Sigmoid colon (tissue), 7 donors: ENCODE measurements at regions of chr2 and their contacts with region 1.

Region 1: DNA sequence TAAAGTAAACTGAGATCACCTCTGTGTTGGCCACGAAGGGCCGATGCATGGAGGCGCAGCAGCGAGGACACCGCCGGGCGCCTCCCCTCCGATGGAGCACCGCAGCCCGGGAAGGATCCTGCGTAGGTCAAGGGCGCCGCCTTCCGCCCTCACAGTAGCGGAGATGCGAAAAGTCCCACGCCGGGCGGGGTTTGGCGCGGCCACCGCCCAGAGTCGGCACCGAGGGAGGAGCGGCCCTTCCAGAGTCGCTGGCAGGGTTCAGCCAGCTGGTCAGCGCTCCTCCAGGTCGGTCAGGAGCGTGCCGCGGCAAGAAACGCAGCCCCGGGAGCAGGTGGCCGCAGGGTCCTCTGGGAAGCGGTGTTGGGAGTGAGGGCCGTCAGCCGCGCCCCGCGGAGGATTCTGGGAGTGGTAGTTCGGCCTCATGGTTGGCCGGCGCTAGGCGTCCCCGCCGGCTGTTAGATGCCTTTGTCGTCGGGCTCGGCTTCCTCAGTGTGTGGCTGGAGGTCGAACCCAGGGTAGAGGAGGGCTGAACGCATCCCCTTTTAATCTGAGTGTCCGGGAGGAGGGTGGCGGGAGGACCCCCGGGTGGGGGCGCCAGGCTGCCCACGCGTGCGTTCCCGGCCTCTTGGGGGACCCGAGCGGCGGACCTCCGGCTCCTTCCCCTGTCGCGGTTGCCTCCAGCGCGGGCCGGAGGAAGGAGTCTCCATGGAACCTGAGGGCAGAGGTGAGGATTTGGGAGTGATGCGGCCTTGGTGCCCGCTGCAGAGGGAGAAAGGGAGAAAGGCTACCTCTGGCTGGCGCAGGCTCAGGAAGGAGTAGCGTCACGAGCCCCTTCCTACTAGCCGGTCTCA is at the start of gene ZNF892:
- DNase-seq: peak; percentile 95
- H3K4me3 ChIP-seq: peak within 1 kb of the TSS; percentile 65 to 77 (median 74)
- H3K27ac ChIP-seq: peak within 1 kb of the TSS; percentile 81 to 91 (median 90)
- H3K4me1 ChIP-seq: peaks cover 0 to 22% (median 15%) of the 10 kb centered on the region in 4 donors
- H3K27me3 ChIP-seq: no peaks in the 10 kb centered on the region
- CTCF ChIP-seq: peak in 1 of 4 experiments; percentile 41
- EP300 ChIP-seq: no peak
- POLR2A ChIP-seq: peak; percentile 48 to 58
- total RNA-seq, gene ZNF892: 6.4 to 9.9 (median 8.6) TPM

Region 2: GRCh38 chr2:95022309-95023221 is 184.8 kb before region 1 on chr2:
- intact Hi-C with region 1: no loop called
- DNase-seq: no peak
- H3K4me3 ChIP-seq: no peak overlapping the region
- H3K27ac ChIP-seq: no peak overlapping the region
- H3K4me1 ChIP-seq: peaks cover 0 to 21% (median 11%) of the 10 kb centered on the region in 4 donors
- H3K27me3 ChIP-seq: peaks cover 19 to 54% (median 29%) of the 10 kb centered on the region in 3 donors
- CTCF ChIP-seq: peak; percentile 57 to 96 (median 79)
- EP300 ChIP-seq: no peak
- POLR2A ChIP-seq: no peak

Region 3: DNA sequence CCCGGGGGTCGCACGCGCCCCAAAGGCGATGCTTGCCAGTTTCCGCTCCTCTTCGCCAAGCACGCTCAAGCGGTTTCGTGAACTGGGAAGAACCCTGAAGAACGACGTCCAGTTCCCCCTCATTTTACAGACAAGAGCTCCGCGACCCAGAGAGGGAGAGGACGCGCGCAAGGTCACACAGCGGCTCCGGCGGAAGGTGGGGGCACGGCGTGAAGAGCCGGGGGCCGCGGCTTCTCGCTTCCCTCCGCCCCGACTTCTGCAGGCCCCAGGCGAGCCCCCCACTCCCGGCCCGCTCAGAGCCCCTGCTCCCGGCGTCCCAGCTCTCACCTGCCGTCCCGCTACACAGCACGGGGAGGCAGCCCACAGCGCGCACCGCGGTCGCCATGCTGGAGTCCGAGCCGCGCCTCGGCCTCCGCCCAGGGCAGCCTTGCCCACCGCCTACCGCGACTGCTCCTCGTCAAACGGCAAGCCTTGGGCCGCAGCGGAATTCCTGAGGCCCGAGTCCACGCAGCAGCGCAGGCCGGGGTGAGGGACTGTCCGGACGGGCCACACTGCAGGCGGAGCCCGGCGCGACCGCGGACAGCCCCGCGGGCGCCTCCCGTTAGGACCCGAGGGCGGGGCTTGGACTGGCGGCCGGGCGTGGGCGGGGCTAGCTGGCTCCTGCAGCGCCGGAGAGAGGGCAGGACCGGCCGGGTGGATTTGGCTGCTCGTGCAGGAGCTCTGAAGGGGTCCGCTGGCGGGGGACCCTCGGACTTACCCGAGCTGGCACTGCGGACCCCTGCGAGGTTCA is 85.7 kb before region 1 on chr2 and contains the start of gene MRPS5:
- intact Hi-C with region 1: loop called (anchors 1 kb)
- DNase-seq: peak; percentile 87
- H3K4me3 ChIP-seq: peak within 1 kb of the TSS; percentile 75 to 94 (median 84)
- H3K27ac ChIP-seq: peak within 1 kb of the TSS; percentile 89 to 95 (median 92)
- H3K4me1 ChIP-seq: peaks cover 0 to 35% (median 26%) of the 10 kb centered on the region in 4 donors
- H3K27me3 ChIP-seq: no peaks in the 10 kb centered on the region
- CTCF ChIP-seq: no peak
- EP300 ChIP-seq: no peak
- POLR2A ChIP-seq: no peak
- total RNA-seq, gene MRPS5: 43.5 to 77.3 (median 48.3) TPM

Region 4: DNA sequence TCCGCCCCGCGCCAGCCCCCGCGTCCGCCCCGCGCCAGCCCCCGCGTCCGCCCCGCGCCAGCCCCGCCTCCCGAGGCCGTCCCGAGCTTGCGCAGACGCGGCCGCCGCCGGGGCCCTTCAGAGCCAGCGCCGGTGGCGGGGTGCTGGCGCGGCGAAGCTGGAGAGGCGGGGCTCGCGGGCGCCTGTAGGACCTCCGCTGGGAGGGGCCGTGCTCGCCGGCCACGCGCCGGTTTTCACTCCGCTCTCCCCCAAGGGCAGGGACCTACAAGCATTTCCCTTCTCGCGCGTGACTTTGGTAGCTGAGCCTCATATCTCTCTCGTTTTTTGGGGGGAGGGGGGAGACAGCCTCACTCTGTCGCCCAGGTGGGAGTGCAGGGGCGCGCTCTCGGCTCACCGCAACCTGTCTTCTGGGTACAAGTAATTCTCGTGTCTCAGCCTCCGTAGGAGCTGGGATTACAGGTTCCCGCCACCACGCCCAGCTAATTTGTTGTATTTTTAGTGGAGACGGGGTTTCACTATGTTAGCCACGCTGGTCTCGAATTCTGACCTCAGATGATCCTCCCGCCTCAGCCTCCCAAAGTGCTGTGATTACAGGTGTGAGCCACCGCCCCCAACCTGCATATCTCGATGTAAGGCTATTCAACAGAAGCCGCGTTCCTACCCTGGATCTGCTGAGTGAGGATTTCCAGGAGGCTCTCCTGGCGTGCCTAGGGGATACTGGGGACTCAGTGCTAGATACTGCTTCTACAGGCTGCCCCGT is 47.5 kb before region 1 on chr2 and contains the start of gene ZNF514:
- intact Hi-C with region 1: loop called (anchors 2 kb)
- DNase-seq: peak; percentile 92
- H3K4me3 ChIP-seq: peak within 1 kb of the TSS; percentile 71 to 80 (median 75)
- H3K27ac ChIP-seq: peak within 1 kb of the TSS; percentile 84 to 91 (median 90)
- H3K4me1 ChIP-seq: peaks cover 0 to 28% (median 23%) of the 10 kb centered on the region in 4 donors
- H3K27me3 ChIP-seq: no peaks in the 10 kb centered on the region
- CTCF ChIP-seq: no peak
- EP300 ChIP-seq: no peak
- POLR2A ChIP-seq: no peak
- total RNA-seq, gene ZNF514: 12.0 to 29.4 (median 16.5) TPM

Region 5: GRCh38 chr2:95165129-95166064 is 41.9 kb before region 1 on chr2 and contains the start of gene ZNF2:
- intact Hi-C with region 1: loop called (anchors 2 kb)
- DNase-seq: peak; percentile 99
- H3K4me3 ChIP-seq: peak within 1 kb of the TSS; percentile 66 to 82 (median 72)
- H3K27ac ChIP-seq: peak within 1 kb of the TSS; percentile 90 to 97 (median 91)
- H3K4me1 ChIP-seq: peaks cover 0 to 24% (median 18%) of the 10 kb centered on the region in 4 donors
- H3K27me3 ChIP-seq: no peaks in the 10 kb centered on the region
- CTCF ChIP-seq: no peak
- EP300 ChIP-seq: no peak
- POLR2A ChIP-seq: peak; percentile 32 to 49
- total RNA-seq, gene ZNF2: 2.5 to 5.8 (median 3.3) TPM